Activated naive CD4-positive, alpha-beta T cell treated with anti-CD3 and anti-CD28 coated beads for 36 hours (primary cell): ENCODE measurements at regions of chr13 and their contacts with region 1.

Region 1: DNA sequence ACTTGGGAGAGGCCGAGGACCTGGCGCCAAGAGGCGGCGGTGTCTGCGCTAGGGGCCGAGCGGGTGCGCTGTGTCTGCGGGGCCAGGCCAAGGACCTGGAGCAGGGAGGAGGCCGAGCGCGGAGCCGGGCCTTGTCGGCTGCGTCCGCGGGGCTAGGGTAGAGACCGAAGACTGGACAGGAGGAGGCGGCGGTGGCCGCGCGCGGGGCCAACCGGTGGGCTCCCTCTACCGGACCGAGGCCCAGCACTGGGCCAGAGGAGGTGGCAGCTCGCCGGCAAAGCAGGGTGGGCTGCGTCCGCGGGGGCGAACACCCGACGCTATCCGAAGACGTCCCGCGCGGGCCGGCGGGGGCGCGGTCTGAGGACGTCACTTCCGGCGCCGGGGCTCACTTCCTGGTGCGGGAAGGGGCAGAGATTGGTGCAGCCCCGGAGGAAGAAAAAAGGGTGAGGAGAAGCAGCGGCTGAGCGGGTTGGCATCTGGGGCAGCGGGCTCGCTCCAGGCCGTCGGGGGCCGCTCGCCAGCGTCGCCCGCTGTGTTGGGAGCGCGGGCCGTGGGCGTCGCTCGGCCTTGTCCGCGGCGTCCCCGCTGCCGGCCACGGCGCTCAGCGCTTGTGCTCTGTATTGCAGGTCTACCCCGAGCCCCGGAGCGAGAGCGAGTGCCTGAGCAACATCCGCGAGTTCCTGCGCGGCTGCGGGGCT is 38.3 kb downstream of the ARHGEF7 start:
- DNase-seq: peak; percentile 93
- H3K4me3 Mint-ChIP-seq: peak overlapping the region; percentile 90
- H3K27ac Mint-ChIP-seq: peak overlapping the region; percentile 90
- H3K4me1 Mint-ChIP-seq: peaks cover 31% of the 10 kb centered on the region
- H3K27me3 Mint-ChIP-seq: no peaks in the 10 kb centered on the region

Region 2: DNA sequence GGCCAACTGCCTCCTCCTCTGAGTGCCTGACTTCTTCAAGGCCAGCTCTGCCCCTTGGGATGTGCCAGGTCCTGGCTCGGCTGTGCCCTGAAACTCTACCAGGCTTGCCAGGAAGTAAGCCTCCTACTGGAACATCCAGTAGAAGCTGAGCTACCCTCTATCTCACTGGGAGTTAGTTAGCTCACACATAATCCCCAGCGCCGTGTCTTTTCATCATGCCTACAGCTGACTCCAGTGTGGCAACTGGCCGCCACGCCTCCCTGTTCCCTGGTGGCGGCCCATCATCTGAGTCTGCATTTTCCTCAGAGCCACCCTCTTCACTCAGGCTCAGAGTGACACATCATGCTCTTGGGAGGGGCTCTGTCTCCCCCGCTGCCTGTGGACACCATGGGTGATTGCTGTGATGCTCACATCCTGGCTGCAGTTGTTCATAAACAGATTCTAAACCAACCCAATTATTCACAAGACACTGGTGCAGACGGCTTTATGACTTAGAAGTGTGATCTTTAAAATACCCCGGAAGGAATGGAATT is 1235.2 kb before region 1 on chr13:
- CTCF ChIA-PET with region 1: no interaction called
- intact Hi-C with region 1: no loop called
- DNase-seq: no peak
- H3K4me3 Mint-ChIP-seq: no peak overlapping the region
- H3K27ac Mint-ChIP-seq: no peak overlapping the region
- H3K4me1 Mint-ChIP-seq: no peaks in the 10 kb centered on the region
- H3K27me3 Mint-ChIP-seq: peaks cover 13% of the 10 kb centered on the region

Region 3: GRCh38 chr13:111114362-111115060 is 38.9 kb before region 1 on chr13:
- CTCF ChIA-PET with region 1: no interaction called
- intact Hi-C with region 1: loop called (anchors 2 kb)
- DNase-seq: peak; percentile 41
- H3K4me3 Mint-ChIP-seq: peak overlapping the region; percentile 78
- H3K27ac Mint-ChIP-seq: no peak overlapping the region
- H3K4me1 Mint-ChIP-seq: peaks cover 11% of the 10 kb centered on the region
- H3K27me3 Mint-ChIP-seq: peaks cover 70% of the 10 kb centered on the region

Region 4: GRCh38 chr13:111184458-111185401 is 31.3 kb after region 1 on chr13:
- CTCF ChIA-PET with region 1: interaction called, 3 read pairs
- intact Hi-C with region 1: loop called (anchors 1 kb)
- DNase-seq: peak; percentile 67
- H3K4me3 Mint-ChIP-seq: peak overlapping the region; percentile 58
- H3K27ac Mint-ChIP-seq: peak overlapping the region; percentile 86
- H3K4me1 Mint-ChIP-seq: peaks cover 94% of the 10 kb centered on the region
- H3K27me3 Mint-ChIP-seq: no peaks in the 10 kb centered on the region

Region 5: DNA sequence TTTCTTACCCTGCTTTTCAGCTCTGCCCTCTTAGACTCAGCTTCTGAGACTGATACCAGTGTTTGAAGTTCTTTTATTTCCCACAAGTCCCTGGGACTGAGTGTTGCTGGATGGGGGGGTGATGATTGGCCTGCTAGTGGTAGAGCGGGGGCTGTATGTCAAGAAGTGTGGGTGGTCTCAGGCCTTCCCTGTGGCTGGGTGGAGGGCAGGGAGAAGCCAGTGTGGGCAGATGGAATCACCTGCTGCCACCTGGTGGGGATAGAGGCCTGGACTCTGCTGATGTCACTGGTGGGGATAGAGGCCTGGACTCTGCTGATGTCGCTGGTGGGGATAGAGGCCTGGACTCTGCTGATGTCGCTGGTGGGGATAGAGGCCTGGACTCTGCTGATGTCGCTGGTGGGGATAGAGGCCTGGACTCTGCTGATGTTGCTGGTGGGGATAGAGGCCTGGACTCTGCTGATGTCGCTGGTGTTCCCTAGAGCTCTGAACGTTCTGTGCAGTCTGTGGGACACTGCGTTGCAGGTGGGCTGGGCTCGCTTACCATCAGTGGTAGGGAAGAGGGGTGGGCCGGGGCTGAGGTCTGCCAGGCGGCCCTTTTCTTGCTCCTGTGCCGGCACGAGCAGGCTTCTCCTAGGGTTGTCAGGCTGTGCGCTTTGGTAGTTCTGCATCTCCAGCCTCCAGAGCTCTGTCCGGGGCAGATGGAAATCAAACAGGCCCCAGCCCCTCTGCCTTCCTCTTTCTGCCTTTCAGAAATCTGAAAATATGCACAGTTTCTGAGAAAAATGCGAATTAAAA is 62.9 kb after region 1 on chr13:
- CTCF ChIA-PET with region 1: no interaction called
- intact Hi-C with region 1: loop called (anchors 1 kb)
- DNase-seq: peak; percentile 62
- H3K4me3 Mint-ChIP-seq: no peak overlapping the region
- H3K27ac Mint-ChIP-seq: no peak overlapping the region
- H3K4me1 Mint-ChIP-seq: peaks cover 27% of the 10 kb centered on the region
- H3K27me3 Mint-ChIP-seq: no peaks in the 10 kb centered on the region